ENCODE measurements at regions of chr11 and their contacts with region 1.

Region 1: DNA sequence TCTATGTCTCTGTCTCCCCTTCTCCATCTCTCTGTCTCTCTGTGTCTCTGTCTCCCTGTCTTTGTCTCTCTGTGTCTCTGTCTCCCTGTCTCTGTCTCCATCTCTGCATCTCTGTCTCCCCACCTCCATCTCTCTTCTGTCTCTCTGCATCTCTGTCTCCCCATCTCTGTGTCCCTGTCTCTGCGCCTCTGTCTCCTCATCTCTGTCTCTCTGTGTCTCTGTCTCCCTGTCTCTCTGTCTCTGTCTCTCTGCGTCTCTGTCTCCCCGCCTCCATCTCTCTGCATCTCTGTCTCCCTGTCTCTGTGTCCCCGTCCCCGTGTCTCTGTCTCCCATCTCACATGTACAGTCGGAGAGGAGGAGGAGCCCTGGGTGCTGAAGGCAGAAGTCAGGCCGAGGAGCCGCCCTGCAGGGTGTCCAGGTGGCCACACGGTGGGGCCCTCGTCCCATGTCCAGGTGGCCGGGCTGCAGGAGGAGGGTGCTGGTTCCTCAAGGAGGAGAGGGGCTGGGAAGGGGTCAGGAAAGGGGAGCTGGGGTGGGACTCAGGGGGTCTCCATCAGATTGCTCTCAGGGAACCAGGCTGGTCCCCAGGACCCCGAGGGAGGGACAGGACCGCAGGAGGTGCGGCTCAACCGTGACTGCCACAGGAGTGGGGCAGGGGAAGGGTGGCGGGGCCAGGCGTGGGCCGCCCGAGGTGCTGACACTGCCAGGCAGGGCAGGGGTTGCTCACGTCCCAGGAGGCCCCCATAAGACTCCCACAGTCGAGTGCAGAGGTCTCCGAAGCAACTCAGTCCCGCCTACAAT is 25.6 kb upstream of the TH start:
- DNase-seq: peak; percentile 82
- CTCF ChIP-seq: peak; percentile 96

Region 2: DNA sequence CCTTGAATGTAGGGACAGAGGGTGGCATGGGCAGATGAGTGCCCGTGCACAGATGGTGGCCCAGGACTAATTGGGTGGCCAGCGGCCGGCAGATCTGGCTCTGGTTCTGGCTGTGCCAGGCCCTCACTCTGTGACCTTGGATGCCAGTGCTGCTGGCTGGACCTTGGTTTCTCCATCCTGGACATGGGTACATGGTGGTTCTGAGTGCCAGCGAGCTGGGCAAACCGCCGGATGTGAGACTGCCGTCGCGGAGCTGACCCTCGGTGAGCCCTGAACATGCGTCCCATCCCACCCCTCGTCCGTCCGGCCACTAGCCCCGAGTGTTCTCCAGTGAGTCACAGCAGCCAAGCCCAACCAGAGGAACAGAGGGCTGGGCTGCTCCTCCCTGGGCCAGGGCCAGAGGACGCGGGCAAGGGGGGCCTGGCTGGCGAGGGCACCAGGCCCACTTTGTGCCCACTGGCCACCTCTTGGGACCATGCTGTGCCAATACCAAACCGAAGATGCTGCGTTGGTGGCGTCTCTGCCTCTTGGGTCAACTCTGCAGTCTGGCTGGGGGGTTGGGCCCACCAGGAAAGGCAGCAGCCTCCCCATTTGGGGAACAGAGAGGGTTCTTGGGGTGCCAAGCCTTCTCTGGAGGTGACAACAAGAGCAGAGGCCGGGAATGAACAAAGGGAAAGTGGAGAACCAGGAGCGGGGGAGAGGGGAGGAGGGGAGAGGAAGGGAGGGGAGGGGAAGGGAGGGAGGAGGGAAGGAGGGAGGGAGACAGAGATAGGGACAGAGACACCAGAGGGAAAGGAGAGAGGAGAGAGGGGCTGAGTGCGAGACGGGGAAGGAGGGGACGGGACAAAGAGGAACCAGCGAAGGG is 333.6 kb before region 1 on chr11:
- CTCF ChIA-PET with region 1: no interaction called
- POLR2A ChIA-PET with region 1: no interaction called
- DNase-seq: no peak
- CTCF ChIP-seq: no peak

Region 3: DNA sequence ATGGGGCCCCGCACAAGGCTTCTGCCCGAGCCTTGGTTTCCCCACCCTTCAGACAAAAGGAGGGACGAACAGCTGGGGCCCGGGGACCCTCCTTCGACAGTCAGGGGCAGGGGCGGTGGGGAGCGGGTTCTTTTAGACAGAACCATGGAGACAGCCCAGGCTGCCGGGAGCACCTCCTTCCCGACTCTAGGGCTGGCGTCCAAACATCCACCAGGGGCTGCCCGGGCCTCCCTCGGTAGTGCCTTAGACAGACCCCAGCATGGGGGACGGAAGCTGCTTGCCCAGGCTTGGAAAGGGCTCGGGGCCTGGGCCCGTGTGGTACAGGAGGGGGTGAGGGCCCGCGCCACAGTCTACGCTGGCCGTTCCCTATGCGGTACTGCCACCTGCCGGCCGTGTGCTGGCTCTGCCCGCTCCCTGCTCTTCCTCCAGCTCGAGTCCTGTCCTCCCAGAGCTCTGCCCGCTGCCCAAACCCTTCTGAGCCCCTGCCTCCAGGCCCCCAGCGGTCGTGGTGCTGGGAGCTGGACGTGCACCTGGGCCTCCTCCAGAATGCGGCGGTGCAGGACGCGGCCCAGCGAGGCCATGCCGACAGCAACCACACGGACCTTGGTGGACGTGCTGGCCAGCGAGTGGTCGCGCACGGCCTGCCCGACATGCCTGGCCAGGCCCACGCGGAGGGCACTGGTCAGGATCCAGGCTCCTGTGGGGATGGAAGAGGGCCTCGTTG is 223.5 kb after region 1 on chr11:
- CTCF ChIA-PET with region 1: interaction called, 46 read pairs
- POLR2A ChIA-PET with region 1: no interaction called
- DNase-seq: peak; percentile 92
- CTCF ChIP-seq: peak; percentile 96

Region 4: GRCh38 chr11:2477254-2477653 is 280.1 kb after region 1 on chr11:
- CTCF ChIA-PET with region 1: no interaction called
- POLR2A ChIA-PET with region 1: no interaction called
- DNase-seq: no peak
- CTCF ChIP-seq: no peak

Measured in GM10248 (cell line).